HEK293T (cell line): ENCODE measurements at regions of chr19 and their contacts with region 1.

Region 1: DNA sequence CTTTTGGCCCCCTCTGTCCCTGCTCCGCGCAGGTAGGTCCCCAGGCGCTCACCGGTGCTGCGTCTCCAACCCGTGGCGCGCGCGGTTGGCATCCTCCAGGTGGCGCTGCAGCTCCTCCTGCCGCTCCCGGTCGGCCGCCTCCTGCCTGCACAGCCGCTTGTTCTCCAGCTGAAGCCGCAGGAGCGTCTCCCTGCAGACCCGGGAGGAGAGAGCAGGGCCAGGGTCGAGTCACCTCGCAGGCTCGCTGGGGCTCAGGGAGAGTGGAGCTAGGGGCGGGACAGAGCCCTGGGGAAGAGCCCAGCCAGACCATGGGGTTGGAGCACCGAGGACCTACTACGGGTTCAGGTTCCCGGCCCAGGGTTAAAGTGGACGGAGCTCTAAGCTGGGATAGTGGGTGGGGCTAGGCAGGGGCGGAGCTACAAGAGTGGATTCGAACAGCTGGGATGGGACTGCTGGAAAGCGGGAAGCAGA is 9.3 kb downstream of the HOOK2 start:
- DNase-seq: peak; percentile 86

Region 2: GRCh38 chr19:12711187-12711586 is 54.9 kb before region 1 on chr19:
- CTCF ChIA-PET with region 1: no interaction called
- POLR2A ChIA-PET with region 1: no interaction called
- DNase-seq: no peak

Region 3: GRCh38 chr19:12736995-12737834 is 28.9 kb before region 1 on chr19 and contains the start of gene GET3:
- CTCF ChIA-PET with region 1: no interaction called
- POLR2A ChIA-PET with region 1: interaction called, 13 read pairs
- DNase-seq: peak; percentile 91

Region 4: GRCh38 chr19:12777217-12778016 is 11.3 kb after region 1 on chr19:
- CTCF ChIA-PET with region 1: interaction called, 10 read pairs
- POLR2A ChIA-PET with region 1: interaction called, 8 read pairs
- DNase-seq: peak; percentile 76

Region 5: DNA sequence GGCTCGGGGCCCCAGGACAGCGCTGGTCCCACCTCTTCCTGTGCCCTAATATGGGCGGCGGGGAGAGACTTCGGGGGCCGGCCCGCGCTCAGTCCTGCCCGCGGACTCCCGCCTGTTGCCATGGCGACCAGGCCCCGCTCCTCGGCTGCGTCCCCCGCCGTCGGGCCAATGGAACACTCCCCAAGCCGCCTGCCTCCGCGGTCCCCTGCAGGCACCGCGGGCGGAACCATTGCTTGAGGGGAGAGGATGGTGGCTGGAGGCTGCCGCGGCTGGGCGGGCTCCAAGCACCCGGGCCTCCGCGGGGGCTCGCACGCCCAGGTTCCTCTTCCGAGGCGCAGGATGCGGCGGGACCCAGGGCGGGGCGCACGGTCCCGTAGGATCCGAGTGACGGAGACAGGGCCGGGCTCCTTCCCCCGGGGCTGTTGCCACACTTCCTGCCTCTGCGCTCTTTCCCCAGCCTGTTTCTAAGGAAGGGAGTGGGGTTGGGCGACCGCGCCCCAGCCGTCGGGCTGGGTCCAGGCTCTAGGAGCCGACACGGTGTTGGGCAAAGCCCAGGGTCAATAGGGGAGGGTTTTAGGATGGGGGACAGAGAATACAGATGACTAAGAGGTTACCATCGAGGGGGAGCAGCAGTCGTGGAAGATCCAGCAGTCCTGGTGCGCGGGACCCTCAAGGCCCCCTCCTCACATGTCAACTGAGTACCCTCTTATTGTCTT is 24.0 kb after region 1 on chr19:
- CTCF ChIA-PET with region 1: interaction called, 23 read pairs
- POLR2A ChIA-PET with region 1: interaction called, 13 read pairs
- DNase-seq: peak; percentile 77

Region 6: GRCh38 chr19:12796146-12797071 is 30.3 kb after region 1 on chr19:
- CTCF ChIA-PET with region 1: interaction called, 23 read pairs
- POLR2A ChIA-PET with region 1: interaction called, 13 read pairs
- DNase-seq: peak; percentile 63

Region 7: DNA sequence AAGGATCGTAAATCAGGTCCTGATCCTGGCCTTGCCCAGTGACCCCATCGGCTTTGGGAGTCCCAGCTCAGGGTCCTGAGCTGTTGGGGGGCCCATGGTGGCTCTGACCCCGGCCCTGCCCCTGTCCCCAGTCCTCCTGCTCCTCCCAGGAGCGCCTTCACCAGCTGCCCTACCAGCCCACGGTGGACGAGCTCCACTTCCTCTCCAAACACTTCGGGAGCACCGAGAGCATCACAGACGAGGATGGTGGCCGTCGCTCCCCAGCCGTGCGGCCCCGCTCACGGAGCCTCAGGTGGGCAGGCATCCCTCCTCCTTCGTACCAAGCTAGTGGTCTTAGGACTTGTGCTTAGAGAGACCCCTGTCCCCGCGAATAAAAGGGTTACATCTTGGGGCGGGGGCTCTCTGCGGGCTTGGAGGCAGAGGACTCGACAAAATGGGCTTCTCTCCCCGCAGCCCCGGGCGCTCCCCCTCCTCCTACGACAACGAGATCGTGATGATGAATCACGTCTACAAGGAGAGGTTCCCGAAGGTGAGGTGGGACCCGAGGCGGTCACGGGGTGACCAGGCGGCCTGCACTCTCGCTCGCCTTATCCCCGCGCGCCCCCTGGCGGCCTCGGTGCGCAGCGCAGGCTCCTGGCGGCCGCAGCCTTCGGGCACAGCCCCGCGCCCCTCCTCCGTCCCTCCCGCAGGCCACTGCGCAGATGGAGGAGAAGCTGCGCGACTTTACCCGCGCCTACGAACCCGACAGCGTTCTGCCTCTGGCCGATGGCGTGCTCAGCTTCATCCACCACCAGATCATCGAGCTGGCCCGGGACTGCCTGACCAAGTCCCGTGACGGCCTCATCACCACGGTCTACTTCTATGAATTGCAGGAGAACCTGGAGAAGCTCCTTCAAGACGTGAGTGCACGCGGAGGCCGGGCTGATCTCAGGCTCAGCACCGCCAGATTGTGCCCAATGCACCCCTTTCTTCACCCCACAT is 81.4 kb after region 1 on chr19:
- CTCF ChIA-PET with region 1: interaction called, 15 read pairs
- POLR2A ChIA-PET with region 1: interaction called, 3 read pairs
- DNase-seq: peak; percentile 89